ENCODE measurements at regions of chr2 and their contacts with region 1.

Region 1: GRCh38 chr2:75608684-75609333 is 37.8 kb upstream of the MRPL19 start:
- DNase-seq: peak; percentile 58
- H3K4me3 ChIP-seq: peak overlapping the region in 1 of 3 experiments; percentile 30
- H3K27ac ChIP-seq: no peak overlapping the region
- H3K4me1 ChIP-seq: peaks cover 55% of the 10 kb centered on the region
- H3K27me3 ChIP-seq: no peaks in the 10 kb centered on the region
- CTCF ChIP-seq: peak; percentile 92 to 99

Region 2: GRCh38 chr2:75466708-75467311 is 142.0 kb before region 1 on chr2:
- CTCF ChIA-PET with region 1: interaction called, 6 read pairs
- dilution Hi-C with region 1: loop called (anchors 5 kb)
- in situ Hi-C with region 1: loop called (anchors 5 kb)
- intact Hi-C with region 1: loop called (anchors 1 kb)
- DNase-seq: peak; percentile 23
- H3K4me3 ChIP-seq: no peak overlapping the region
- H3K27ac ChIP-seq: no peak overlapping the region
- H3K4me1 ChIP-seq: no peaks in the 10 kb centered on the region
- H3K27me3 ChIP-seq: no peaks in the 10 kb centered on the region
- CTCF ChIP-seq: peak; percentile 59 to 72

Region 3: GRCh38 chr2:75523313-75524275 is 85.2 kb before region 1 on chr2:
- CTCF ChIA-PET with region 1: no interaction called
- dilution Hi-C with region 1: loop called (anchors 5 kb)
- in situ Hi-C with region 1: no loop called
- intact Hi-C with region 1: loop called (anchors 2 kb)
- DNase-seq: peak; percentile 98
- H3K4me3 ChIP-seq: no peak overlapping the region
- H3K27ac ChIP-seq: no peak overlapping the region
- H3K4me1 ChIP-seq: peaks cover 62% of the 10 kb centered on the region
- H3K27me3 ChIP-seq: no peaks in the 10 kb centered on the region
- CTCF ChIP-seq: no peak

Region 4: GRCh38 chr2:75560768-75561565 is 47.8 kb before region 1 on chr2 and contains the start of gene EVA1A:
- CTCF ChIA-PET with region 1: interaction called, 7 read pairs
- dilution Hi-C with region 1: no loop called
- in situ Hi-C with region 1: loop called in 1 of 2 experiments (anchors 5 kb)
- intact Hi-C with region 1: loop called (anchors 1 kb)
- DNase-seq: peak; percentile 70
- H3K4me3 ChIP-seq: peak within 1 kb of the TSS; percentile 72 to 77 (median 75)
- H3K27ac ChIP-seq: peak within 1 kb of the TSS; percentile 61
- H3K4me1 ChIP-seq: peaks cover 30% of the 10 kb centered on the region
- H3K27me3 ChIP-seq: no peaks in the 10 kb centered on the region
- CTCF ChIP-seq: no peak
- total RNA-seq, gene EVA1A: 19.2 to 28.7 TPM

Region 5: GRCh38 chr2:75570948-75571729 is 37.7 kb before region 1 on chr2:
- CTCF ChIA-PET with region 1: interaction called, 22 read pairs
- dilution Hi-C with region 1: no loop called
- in situ Hi-C with region 1: no loop called
- intact Hi-C with region 1: loop called (anchors 1 kb)
- DNase-seq: no peak
- H3K4me3 ChIP-seq: no peak overlapping the region
- H3K27ac ChIP-seq: no peak overlapping the region
- H3K4me1 ChIP-seq: peaks cover 49% of the 10 kb centered on the region
- H3K27me3 ChIP-seq: no peaks in the 10 kb centered on the region
- CTCF ChIP-seq: no peak

Region 6: GRCh38 chr2:75592028-75592427 is 16.8 kb before region 1 on chr2:
- CTCF ChIA-PET with region 1: interaction called, 8 read pairs
- dilution Hi-C with region 1: no loop called
- in situ Hi-C with region 1: no loop called
- intact Hi-C with region 1: loop called (anchors 1 kb)
- DNase-seq: peak; percentile 95
- H3K4me3 ChIP-seq: no peak overlapping the region
- H3K27ac ChIP-seq: peak overlapping the region; percentile 86
- H3K4me1 ChIP-seq: peaks cover 44% of the 10 kb centered on the region
- H3K27me3 ChIP-seq: no peaks in the 10 kb centered on the region
- CTCF ChIP-seq: no peak

Region 7: DNA sequence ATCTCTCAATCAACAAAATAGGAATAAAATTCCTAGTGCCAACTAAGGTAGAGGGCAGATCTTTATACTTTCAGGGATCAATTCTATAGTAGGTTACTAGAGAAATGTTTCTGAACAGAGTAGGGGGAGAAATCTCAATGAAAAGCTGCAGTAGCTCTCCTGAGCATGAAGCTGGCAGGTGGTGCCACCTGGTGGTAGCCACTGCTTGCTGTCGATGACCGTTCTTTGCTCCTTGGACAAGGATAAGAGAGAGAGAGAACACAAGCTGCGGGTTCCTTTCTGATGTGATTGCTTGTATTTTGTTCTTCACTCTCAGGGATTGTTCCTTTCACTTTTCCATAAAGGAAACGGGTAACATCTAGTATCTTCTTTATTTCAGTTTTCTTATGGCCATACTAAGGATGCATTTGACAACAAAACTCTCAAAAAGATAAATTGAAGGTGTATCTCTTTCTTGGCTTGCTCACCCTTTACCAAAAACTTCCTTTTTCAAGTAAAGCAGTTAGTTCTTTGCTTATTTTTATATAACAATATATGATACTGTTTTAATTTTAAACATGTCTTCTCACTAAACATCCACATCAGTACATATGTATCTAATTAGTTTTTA is 19.2 kb after region 1 on chr2:
- CTCF ChIA-PET with region 1: no interaction called
- dilution Hi-C with region 1: no loop called
- in situ Hi-C with region 1: no loop called
- intact Hi-C with region 1: loop called (anchors 1 kb)
- DNase-seq: peak; percentile 59
- H3K4me3 ChIP-seq: no peak overlapping the region
- H3K27ac ChIP-seq: no peak overlapping the region
- H3K4me1 ChIP-seq: peaks cover 7% of the 10 kb centered on the region
- H3K27me3 ChIP-seq: no peaks in the 10 kb centered on the region
- CTCF ChIP-seq: peak; percentile 97 to 98

Measured in mammary epithelial cell (primary cell).